ENCODE measurements at regions of chr5 and their contacts with region 1.

Region 1: DNA sequence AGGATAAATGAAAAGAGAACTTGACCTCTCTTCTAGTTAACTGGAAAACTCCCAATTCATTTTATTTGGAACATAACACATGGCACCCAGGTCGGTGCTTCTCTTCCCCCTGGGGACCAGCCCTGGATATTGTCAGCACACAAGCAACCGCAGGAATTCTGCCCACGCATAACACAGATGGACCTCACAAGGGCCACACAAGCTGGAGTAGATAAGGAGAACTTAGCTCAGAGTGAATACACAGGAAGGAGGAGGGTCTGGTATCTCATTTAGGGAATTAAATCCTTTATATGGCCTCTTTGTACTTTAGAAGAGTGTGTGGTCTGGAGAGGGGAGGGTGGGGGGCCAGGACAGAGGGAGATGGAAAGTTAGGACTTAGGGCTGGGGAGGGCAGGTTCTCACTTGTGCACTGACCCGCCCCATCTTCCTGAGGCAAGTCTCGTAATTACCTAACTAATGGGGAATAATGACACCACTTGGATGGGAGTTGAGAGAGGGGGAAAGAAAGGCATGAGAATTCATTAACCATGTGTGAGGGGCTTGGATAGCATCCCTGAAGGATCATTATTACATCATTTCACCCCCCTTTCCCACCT is 341.2 kb upstream of the WWC1 start:
- DNase-seq: no peak
- ATAC-seq: peak in 1 of 2 donors; percentile 20

Region 2: DNA sequence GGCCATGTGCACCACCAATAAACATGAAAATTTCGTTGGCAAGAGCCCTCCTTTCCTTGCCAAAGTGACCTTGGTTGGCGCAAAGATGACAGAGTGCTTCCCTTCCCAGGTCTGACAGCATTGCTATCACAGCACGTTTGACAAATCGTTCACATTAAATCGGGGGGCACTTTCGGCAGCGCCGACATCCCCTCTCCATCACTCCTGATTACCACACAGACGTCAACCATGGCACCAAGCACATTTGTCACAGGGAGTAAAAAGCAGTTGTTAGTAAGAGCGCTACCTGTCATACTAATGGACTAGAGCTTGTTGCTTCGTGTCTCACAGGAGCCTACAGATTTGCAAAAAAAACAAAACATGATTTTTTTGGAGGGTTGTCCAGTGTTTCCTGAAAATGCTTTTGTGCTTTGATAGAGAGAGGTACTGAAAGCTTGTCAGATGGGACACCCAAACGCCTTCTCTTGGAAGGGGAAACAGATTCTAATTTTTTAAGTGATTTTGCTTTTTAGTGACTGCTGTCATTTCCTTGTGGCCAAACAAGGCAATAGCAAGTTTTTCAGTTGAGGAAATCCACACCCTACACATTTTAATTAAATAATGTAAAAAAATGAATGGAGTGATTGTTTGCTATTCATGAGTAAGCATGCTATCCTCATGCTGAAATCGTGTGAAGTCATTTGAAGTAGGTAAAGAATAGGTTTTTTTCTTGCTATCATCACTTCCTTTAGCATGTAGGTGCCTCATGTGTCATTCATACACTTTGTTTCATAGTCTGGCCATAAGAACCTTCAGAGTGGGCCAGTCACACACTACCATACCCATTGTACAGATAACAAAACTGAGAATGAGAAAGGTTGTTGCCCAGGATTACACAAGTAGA is 341.6 kb before region 1 on chr5:
- intact Hi-C with region 1: no loop called
- DNase-seq: no peak
- ATAC-seq: no peak

Region 3: GRCh38 chr5:167699434-167699833 is 250.8 kb before region 1 on chr5:
- intact Hi-C with region 1: no loop called
- DNase-seq: no peak
- ATAC-seq: peak in 1 of 2 donors; percentile 97

Region 4: GRCh38 chr5:167998148-167998767 is 48.0 kb after region 1 on chr5:
- intact Hi-C with region 1: loop called in 1 of 2 experiments (anchors 5 kb)
- DNase-seq: no peak
- ATAC-seq: peak; percentile 73 to 76